Activated T-helper 2 cell treated with anti-CD3 and anti-CD28 coated beads, Interferon-gamma antibody, Interleukin-2, Interleukin-4, amounts not matched to agents 10 μg/mL and 5 μg/mL and 100 μg/mL, durations not matched to agents 14 hours and 24 hours and 36 hours (primary cell): ENCODE measurements at regions of chr12 and their contacts with region 1.

Region 1: GRCh38 chr12:70719672-70720420 is 82.6 kb upstream of the PTPRB start:
- DNase-seq: no peak
- H3K4me3 Mint-ChIP-seq: peak overlapping the region; percentile 27
- H3K27ac Mint-ChIP-seq: no peak overlapping the region
- H3K4me1 Mint-ChIP-seq: peaks cover 3% of the 10 kb centered on the region
- H3K27me3 Mint-ChIP-seq: peaks cover 6% of the 10 kb centered on the region

Region 2: GRCh38 chr12:70590051-70590450 is 129.8 kb before region 1 on chr12:
- intact Hi-C with region 1: loop called (anchors 1 kb)
- DNase-seq: peak; percentile 27
- H3K4me3 Mint-ChIP-seq: no peak overlapping the region
- H3K27ac Mint-ChIP-seq: no peak overlapping the region
- H3K4me1 Mint-ChIP-seq: no peaks in the 10 kb centered on the region
- H3K27me3 Mint-ChIP-seq: peaks cover 1% of the 10 kb centered on the region

Region 3: DNA sequence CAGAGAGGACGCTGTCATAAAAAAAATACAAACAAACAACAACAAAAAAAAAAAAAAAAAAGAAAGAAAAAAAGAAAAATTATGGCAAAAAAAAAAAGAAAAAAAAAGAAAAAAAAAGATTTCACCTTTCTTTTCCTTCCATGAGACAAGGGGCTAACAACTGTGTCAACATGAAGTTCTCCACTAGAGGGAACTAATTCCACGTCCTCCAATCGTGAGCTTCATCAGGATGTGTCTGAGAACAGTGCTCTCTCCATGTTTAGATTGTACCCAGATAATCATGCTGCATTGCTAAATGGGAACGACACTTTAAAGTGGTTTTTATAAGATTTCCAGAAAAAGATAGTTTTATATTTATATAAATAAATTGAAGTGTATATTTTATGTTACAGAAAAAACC is 13.5 kb after region 1 on chr12:
- intact Hi-C with region 1: no loop called
- DNase-seq: no peak
- H3K4me3 Mint-ChIP-seq: no peak overlapping the region
- H3K27ac Mint-ChIP-seq: no peak overlapping the region
- H3K4me1 Mint-ChIP-seq: no peaks in the 10 kb centered on the region
- H3K27me3 Mint-ChIP-seq: peaks cover 4% of the 10 kb centered on the region